Calu3 (cell line): ENCODE measurements at regions of chr1 and their contacts with region 1.

Region 1: GRCh38 chr1:147676290-147677053 is 6.1 kb upstream of the ACP6 start:
- DNase-seq: peak; percentile 67
- H3K4me3 Mint-ChIP-seq: peak overlapping the region; percentile 39
- H3K27ac Mint-ChIP-seq: peak overlapping the region; percentile 95
- H3K4me1 Mint-ChIP-seq: peaks cover 54% of the 10 kb centered on the region
- H3K27me3 Mint-ChIP-seq: no peaks in the 10 kb centered on the region
- CTCF ChIP-seq: no peak

Region 2: DNA sequence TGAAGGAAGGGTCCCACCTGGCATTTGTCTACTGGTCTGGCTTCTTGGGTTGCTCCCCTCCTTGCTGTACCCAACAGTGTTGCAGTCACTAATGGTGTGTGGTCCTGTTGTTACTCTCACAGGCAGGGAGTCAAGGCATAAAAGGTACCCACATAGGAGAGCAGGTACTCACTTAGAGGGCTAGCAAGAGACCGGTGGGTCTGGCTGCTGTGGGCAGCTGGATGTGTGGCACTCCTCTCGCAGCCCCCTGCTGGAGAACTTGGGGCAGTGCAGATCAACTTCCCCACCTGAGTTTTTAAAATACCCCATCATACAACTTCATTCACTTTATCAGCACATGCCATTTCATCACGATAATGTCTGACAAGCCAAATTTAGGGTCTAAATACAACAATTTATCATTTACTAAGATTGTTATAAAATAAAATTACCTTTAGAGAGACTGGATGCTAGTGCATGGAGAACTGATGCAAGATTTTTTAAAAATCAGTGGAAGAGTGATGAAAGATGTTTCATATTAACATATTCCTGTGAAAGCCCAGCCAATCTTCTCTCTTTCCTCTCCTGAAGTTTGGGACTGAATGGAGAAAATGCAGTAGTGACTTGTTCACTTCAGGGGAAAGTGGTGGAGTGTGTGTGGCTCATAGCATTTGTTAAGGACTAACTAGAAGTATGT is 48.9 kb before region 1 on chr1:
- CTCF ChIA-PET with region 1: no interaction called
- intact Hi-C with region 1: no loop called
- DNase-seq: peak; percentile 74
- H3K4me3 Mint-ChIP-seq: no peak overlapping the region
- H3K27ac Mint-ChIP-seq: no peak overlapping the region
- H3K4me1 Mint-ChIP-seq: no peaks in the 10 kb centered on the region
- H3K27me3 Mint-ChIP-seq: no peaks in the 10 kb centered on the region
- CTCF ChIP-seq: peak; percentile 94

Region 3: DNA sequence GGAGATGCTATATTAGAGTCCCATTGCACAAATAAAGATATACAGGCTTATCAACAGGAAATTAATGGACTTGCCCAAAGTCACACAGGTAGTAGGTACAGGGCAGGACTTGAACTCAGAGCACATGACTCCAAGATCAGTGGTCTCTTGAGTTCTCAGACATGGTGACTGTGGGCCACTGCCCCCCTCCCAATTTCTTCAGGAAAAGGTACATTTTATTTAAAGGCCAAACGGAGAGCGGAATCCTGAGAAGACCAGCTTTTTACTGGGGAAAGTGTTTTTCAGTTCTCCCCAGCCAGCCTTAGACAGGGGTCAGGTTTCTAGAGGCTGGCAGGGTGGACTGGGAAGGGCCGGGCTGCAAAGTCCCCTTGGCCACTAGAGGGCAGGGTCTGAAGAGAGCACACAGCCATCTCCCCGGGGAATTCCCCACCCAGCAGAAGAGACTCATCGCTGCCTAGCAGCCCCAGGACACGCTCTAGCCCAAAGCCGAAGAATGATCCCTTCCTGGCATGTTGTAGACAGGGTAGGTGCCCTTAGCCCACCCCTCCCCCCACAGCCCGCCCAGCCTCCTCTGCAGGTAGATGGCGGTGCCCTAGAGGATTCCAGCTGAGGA is 35.8 kb before region 1 on chr1:
- CTCF ChIA-PET with region 1: no interaction called
- intact Hi-C with region 1: loop called (anchors 5 kb)
- DNase-seq: peak; percentile 93
- H3K4me3 Mint-ChIP-seq: no peak overlapping the region
- H3K27ac Mint-ChIP-seq: no peak overlapping the region
- H3K4me1 Mint-ChIP-seq: peaks cover 20% of the 10 kb centered on the region
- H3K27me3 Mint-ChIP-seq: no peaks in the 10 kb centered on the region
- CTCF ChIP-seq: peak; percentile 95

Region 4: DNA sequence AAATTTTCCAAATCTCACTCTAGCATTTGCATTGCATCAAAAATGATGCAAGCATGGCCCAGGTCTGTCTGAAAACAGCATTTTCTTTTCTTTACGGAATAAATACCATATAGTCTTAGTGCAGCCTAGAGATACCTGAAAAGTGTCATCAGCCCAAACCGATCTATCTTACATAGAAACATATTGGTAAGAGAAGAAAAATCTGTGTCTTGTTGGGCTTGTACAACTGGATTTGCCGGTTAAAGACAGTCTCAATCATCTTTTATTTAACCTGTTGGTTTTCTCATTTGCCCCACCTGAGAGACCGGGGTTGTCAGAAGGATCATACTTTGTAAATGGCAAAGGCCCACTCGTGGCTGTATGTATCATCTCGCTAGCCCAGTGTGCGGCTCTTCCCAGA is 21.9 kb before region 1 on chr1:
- CTCF ChIA-PET with region 1: no interaction called
- intact Hi-C with region 1: no loop called
- DNase-seq: no peak
- H3K4me3 Mint-ChIP-seq: no peak overlapping the region
- H3K27ac Mint-ChIP-seq: no peak overlapping the region
- H3K4me1 Mint-ChIP-seq: peaks cover 14% of the 10 kb centered on the region
- H3K27me3 Mint-ChIP-seq: no peaks in the 10 kb centered on the region
- CTCF ChIP-seq: no peak

Region 5: GRCh38 chr1:147717063-147717565 is 40.6 kb after region 1 on chr1:
- CTCF ChIA-PET with region 1: interaction called, 13 read pairs
- intact Hi-C with region 1: loop called (anchors 2 kb)
- DNase-seq: peak; percentile 89
- H3K4me3 Mint-ChIP-seq: peak overlapping the region; percentile 51
- H3K27ac Mint-ChIP-seq: peak overlapping the region; percentile 99
- H3K4me1 Mint-ChIP-seq: peaks cover 70% of the 10 kb centered on the region
- H3K27me3 Mint-ChIP-seq: no peaks in the 10 kb centered on the region
- CTCF ChIP-seq: no peak